ENCODE measurements at regions of chr4 and their contacts with region 1.

Region 1: GRCh38 chr4:140095694-140096482 is 58.1 kb downstream of the MAML3 start:
- DNase-seq: peak; percentile 34
- ATAC-seq: peak; percentile 46
- H3K4me3 ChIP-seq: peak overlapping the region in 4 of 5 experiments; percentile 1 to 35 (median 22)
- H3K4me3 Mint-ChIP-seq: peak overlapping the region; percentile 51
- H3K27ac ChIP-seq: peak overlapping the region; percentile 43 to 63
- H3K27ac Mint-ChIP-seq: peak overlapping the region; percentile 43
- H3K4me1 ChIP-seq: peaks cover 63 to 66% of the 10 kb centered on the region in 2 donors
- H3K4me1 Mint-ChIP-seq: peaks cover 76% of the 10 kb centered on the region
- H3K27me3 ChIP-seq: no peaks in the 10 kb centered on the region
- H3K27me3 Mint-ChIP-seq: peaks cover 23% of the 10 kb centered on the region
- CTCF ChIP-seq: no peak

Region 2: GRCh38 chr4:140052050-140052449 is 43.8 kb before region 1 on chr4:
- CTCF ChIA-PET with region 1: interaction called, 6 read pairs
- POLR2A ChIA-PET with region 1: no interaction called
- intact Hi-C with region 1: loop called (anchors 5 kb)
- DNase-seq: peak; percentile 44
- ATAC-seq: no peak
- H3K4me3 ChIP-seq: no peak overlapping the region
- H3K4me3 Mint-ChIP-seq: no peak overlapping the region
- H3K27ac ChIP-seq: no peak overlapping the region
- H3K27ac Mint-ChIP-seq: no peak overlapping the region
- H3K4me1 ChIP-seq: peaks cover 32 to 34% of the 10 kb centered on the region in 2 donors
- H3K4me1 Mint-ChIP-seq: peaks cover 47% of the 10 kb centered on the region
- H3K27me3 ChIP-seq: no peaks in the 10 kb centered on the region
- H3K27me3 Mint-ChIP-seq: peaks cover 44% of the 10 kb centered on the region
- CTCF ChIP-seq: peak; percentile 43

Region 3: DNA sequence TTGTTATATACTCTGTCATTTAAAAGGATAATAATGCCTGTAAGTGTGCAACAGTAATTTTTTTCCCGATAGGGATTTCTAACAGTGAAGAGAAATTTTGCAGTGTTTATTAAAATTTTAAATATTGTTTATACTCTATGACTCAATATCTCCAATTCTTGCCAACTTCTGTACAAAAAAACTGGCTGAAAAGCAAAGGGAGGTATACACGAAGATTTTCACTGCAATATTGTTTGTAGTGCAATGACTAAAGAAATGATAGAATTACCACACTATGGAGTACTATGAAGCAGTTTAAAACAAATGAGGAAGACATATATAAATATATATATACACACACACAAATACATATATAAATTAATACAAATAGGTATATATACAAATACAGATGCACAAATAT is 1352.6 kb after region 1 on chr4:
- CTCF ChIA-PET with region 1: no interaction called
- POLR2A ChIA-PET with region 1: no interaction called
- intact Hi-C with region 1: no loop called
- DNase-seq: no peak
- ATAC-seq: no peak
- H3K4me3 ChIP-seq: no peak overlapping the region
- H3K4me3 Mint-ChIP-seq: no peak overlapping the region
- H3K27ac ChIP-seq: no peak overlapping the region
- H3K27ac Mint-ChIP-seq: no peak overlapping the region
- H3K4me1 ChIP-seq: no peaks in the 10 kb centered on the region
- H3K4me1 Mint-ChIP-seq: no peaks in the 10 kb centered on the region
- H3K27me3 ChIP-seq: no peaks in the 10 kb centered on the region
- H3K27me3 Mint-ChIP-seq: no peaks in the 10 kb centered on the region
- CTCF ChIP-seq: no peak